Gastrocnemius medialis (tissue), 4 donors: ENCODE measurements at regions of chr15 and their contacts with region 1.

Region 1: DNA sequence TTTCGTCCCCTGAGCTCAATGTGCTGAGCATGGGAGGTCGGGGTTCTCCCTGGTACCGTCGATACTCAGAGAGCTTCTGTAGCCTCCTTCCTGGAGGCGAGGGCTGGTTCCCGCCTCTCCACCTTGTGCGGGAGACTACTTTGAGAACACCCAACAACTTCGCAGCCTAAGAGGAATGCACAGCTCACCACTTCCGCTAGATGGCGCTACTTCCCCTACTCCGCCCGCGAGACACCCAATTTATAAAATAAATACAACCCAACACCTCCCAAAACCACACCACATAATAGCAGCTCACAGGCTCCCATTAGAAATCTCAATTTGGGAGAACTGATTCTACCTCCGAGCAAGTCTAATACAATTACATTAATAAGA is 1.2 kb downstream of the RGMA start:
- DNase-seq: peak; percentile 70 to 83
- ATAC-seq: peak; percentile 53 to 57
- H3K4me3 ChIP-seq: peak overlapping the region; percentile 76 to 97 (median 80)
- H3K27ac ChIP-seq: peak overlapping the region; percentile 91 to 96 (median 93)
- H3K4me1 ChIP-seq: peaks cover 55 to 60% of the 10 kb centered on the region in 2 donors
- H3K27me3 ChIP-seq: no peaks in the 10 kb centered on the region
- CTCF ChIP-seq: peak; percentile 91 to 97 (median 95)
- POLR2A ChIP-seq: no peak

Region 2: GRCh38 chr15:92903941-92904831 is 183.6 kb before region 1 on chr15:
- in situ Hi-C with region 1: no loop called
- intact Hi-C with region 1: loop called (anchors 5 kb)
- DNase-seq: peak; percentile 98 to 99
- ATAC-seq: peak; percentile 80 to 83
- H3K4me3 ChIP-seq: peak overlapping the region; percentile 64 to 76 (median 71)
- H3K27ac ChIP-seq: peak overlapping the region; percentile 94 to 97 (median 96)
- H3K4me1 ChIP-seq: peaks cover 51 to 60% of the 10 kb centered on the region in 2 donors
- H3K27me3 ChIP-seq: no peaks in the 10 kb centered on the region
- CTCF ChIP-seq: no peak
- POLR2A ChIP-seq: peak; percentile 94 to 98

Region 3: DNA sequence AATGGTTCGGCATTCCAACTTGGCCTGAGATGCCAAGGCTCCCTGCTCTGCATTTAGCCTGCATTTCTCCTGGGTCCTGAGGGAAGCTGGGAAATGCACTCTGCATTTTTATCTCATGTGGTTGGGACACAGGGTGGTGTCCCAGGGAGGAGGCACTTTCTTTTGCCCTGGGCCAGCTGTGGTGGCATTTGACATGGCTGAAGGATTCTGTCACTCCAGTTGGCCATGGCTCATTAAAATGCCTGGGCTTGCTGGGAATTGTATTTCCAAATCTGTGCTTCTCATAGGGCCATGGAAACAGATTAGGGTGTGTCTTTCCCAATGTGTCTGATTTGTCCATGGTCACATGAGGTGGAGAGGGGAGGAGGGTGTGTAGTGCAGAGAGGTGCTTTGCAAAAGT is 129.5 kb after region 1 on chr15:
- in situ Hi-C with region 1: no loop called
- intact Hi-C with region 1: loop called (anchors 1 kb)
- DNase-seq: peak; percentile 76 to 89
- ATAC-seq: peak; percentile 70 to 85
- H3K4me3 ChIP-seq: no peak overlapping the region
- H3K27ac ChIP-seq: peak overlapping the region; percentile 85 to 90 (median 87)
- H3K4me1 ChIP-seq: peaks cover 24 to 49% of the 10 kb centered on the region in 2 donors
- H3K27me3 ChIP-seq: no peaks in the 10 kb centered on the region
- CTCF ChIP-seq: peak in 1 of 5 experiments; percentile 11
- POLR2A ChIP-seq: no peak

Region 4: GRCh38 chr15:93467327-93467726 is 379.5 kb after region 1 on chr15:
- in situ Hi-C with region 1: loop called in 1 of 4 experiments (anchors 25 kb)
- intact Hi-C with region 1: loop called (anchors 5 kb)
- DNase-seq: peak; percentile 96 to 98
- ATAC-seq: peak; percentile 99 to 100
- H3K4me3 ChIP-seq: no peak overlapping the region
- H3K27ac ChIP-seq: peak overlapping the region; percentile 47 to 72 (median 70)
- H3K4me1 ChIP-seq: peaks cover 11 to 22% of the 10 kb centered on the region in 2 donors
- H3K27me3 ChIP-seq: no peaks in the 10 kb centered on the region
- CTCF ChIP-seq: peak in 1 of 5 experiments; percentile 17
- POLR2A ChIP-seq: no peak

Region 5: DNA sequence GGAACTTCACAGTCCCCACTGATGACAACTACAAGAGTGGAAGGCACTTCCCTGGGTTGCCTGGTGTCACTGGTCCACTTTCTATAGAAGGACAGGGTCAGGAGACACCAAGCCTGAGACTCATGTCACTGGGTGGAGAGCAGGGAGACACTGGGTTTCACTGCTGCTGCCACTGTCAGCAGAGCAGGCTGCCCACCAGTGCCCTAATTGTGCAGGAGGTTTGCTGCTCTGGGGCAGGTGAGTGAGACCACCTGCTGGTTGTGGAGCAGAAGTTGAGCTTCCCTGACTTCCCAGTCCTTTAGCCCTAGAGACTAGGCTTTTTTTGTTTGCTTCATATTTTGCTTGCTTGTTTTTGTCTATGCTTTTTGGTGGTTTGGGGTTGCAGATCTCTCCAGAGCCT is 529.6 kb after region 1 on chr15:
- in situ Hi-C with region 1: no loop called
- intact Hi-C with region 1: loop called (anchors 5 kb)
- DNase-seq: peak; percentile 3 to 46
- ATAC-seq: peak in 1 of 2 donors; percentile 81
- H3K4me3 ChIP-seq: no peak overlapping the region
- H3K27ac ChIP-seq: no peak overlapping the region
- H3K4me1 ChIP-seq: peaks cover 0 to 2% of the 10 kb centered on the region in 2 donors
- H3K27me3 ChIP-seq: no peaks in the 10 kb centered on the region
- CTCF ChIP-seq: peak in 4 of 5 experiments; percentile 24 to 45 (median 33)
- POLR2A ChIP-seq: no peak